ENCODE measurements at regions of chr9 and their contacts with region 1.

Region 1: DNA sequence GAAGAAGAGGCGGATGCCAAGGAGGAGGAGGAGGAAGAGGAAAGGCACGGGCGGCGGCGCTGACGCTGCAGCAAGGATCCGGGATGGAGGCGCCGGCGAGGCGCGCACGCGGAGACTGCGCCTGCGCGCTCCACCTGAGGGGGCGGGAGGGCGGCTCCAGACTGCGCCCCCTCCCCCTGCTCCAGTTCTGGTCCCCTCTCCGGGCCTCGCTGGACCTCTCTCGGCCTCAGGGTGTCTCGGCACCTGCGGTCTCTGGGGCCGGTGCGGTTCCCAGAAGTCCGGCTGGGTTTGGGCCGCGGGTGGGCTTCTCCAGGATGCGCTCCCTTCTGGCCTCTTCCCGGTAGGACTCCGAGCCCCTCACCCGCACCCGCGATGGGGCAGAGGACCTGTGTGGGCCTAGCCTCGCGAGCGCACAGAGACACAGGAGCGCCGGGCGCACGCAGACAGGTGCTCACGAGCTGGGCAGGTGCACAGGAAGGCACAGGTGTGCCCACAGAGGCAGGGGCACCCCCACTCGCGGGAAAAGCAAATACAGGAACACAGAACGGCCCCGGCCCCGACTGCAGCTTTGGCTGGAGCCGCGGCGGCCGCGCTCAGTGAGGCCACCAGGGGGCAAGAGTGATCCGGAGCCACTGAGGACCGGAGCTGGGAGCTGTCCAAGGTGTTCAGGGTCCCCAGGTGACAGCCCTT is at the start of gene NPDC1:
- DNase-seq: peak; percentile 82 to 83
- ATAC-seq: peak; percentile 58 to 77 (median 66)
- H3K4me3 ChIP-seq: peak within 1 kb of the TSS; percentile 45 to 80 (median 68)
- H3K27ac ChIP-seq: peak within 1 kb of the TSS; percentile 78 to 92 (median 88)
- H3K4me1 ChIP-seq: peaks cover 25 to 57% (median 40%) of the 10 kb centered on the region in 9 donors
- H3K27me3 ChIP-seq: peaks cover 0 to 76% (median 36%) of the 10 kb centered on the region in 7 donors
- CTCF ChIP-seq: peak; percentile 78 to 94 (median 92)
- total RNA-seq, gene NPDC1: 29.1 to 74.3 (median 52.6) TPM

Region 2: GRCh38 chr9:136965771-136966484 is 80.3 kb before region 1 on chr9:
- intact Hi-C with region 1: no loop called
- DNase-seq: peak; percentile 15 to 43
- ATAC-seq: peak in 3 of 8 donors; percentile 5 to 20 (median 16)
- H3K4me3 ChIP-seq: peak overlapping the region in 3 of 10 donors; percentile 8 to 28 (median 9)
- H3K27ac ChIP-seq: no peak overlapping the region
- H3K4me1 ChIP-seq: peaks cover under 1 to 45% (median 20%) of the 10 kb centered on the region in 9 donors
- H3K27me3 ChIP-seq: no peaks in the 10 kb centered on the region
- CTCF ChIP-seq: no peak

Region 3: DNA sequence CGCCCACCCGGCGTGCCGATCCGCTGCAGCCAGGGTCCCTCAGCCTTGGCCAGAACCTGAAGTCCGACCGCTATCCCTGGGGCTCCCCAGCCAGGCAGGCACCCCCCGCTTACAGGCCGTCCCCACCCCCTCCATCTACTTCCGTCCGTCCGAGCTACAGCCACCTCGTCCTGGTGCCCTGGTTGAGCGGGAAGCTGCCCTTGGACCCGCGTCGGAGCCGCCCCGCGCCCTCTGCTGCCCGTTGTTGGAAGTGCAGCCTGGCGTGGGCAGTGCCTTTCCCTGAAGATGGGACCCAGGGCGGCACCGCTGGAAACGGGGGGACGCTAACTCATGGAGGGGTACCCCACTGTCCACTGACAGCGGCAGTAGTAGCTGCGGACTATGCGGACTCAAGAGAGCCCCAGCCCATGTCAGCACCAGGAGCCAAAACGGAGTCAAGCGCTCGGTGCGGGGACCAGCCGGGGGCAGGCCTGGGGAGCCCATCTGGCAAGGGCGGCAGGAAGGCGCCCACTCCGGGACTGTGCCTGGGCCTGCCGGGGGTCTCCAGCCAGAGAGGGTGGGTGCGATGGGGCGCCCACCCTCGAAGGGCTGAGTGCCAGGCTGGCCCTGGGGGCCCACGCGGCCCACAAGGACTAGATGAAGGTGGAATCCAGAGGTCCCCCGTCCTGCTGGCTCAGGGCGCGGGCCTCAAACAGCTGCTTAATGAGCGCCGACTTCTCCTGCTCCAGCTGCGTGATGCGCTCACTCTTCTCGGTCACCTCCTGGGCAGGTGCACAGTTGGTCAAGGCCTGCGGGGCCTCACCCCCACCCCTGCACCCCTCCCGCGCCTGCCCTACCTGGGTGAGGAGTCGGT is 18.0 kb after region 1 on chr9:
- intact Hi-C with region 1: loop called in 7 of 10 experiments (anchors 1 to 2 kb)
- DNase-seq: peak; percentile 61 to 82
- ATAC-seq: peak; percentile 31 to 79 (median 67)
- H3K4me3 ChIP-seq: no peak overlapping the region
- H3K27ac ChIP-seq: no peak overlapping the region
- H3K4me1 ChIP-seq: peaks cover 0 to 18% (median 4%) of the 10 kb centered on the region in 9 donors
- H3K27me3 ChIP-seq: peaks cover 0 to 12% (median 5%) of the 10 kb centered on the region in 7 donors
- CTCF ChIP-seq: peak; percentile 92 to 99 (median 96)

Region 4: DNA sequence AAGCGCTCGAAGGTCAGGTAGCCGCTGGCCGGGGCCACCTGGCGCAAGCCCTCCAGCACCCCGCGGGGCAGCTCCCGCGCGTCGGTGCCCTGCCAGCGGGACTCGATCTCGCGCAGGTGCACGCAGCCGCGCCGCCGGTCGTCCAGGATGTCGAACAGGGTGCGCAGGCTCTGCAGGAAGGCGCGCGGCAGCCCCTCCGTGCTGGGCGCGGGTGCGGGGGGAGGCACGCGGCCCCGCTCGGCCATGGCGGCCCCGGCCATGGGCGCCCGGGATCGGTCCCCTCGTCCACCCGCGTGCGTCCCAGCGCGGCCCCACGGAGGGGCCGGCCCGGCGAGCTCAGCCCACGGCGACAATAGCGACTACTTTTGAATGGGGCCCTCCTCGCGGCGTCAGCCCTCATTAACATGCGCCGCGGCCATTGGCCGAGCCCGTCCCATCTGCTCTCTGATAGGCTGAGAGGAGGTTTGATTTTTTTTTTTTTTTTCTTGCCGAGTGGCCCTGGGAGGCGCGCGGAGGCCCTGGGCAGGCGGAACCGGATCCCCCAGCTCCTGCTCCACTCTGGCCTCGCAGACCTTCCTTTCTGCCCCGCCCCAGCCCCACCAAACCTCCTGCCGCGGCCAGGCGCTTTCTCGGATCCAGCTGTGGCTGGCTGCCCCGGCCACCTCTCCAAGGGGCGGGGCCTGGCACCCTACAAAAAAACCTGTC is 24.1 kb after region 1 on chr9 and contains the start of gene SAPCD2:
- intact Hi-C with region 1: loop called in 6 of 10 experiments (anchors 1 to 2 kb)
- DNase-seq: peak; percentile 87 to 88
- ATAC-seq: peak; percentile 88 to 97 (median 94)
- H3K4me3 ChIP-seq: peak within 1 kb of the TSS in 9 of 10 donors; percentile 12 to 58 (median 50)
- H3K27ac ChIP-seq: peak within 1 kb of the TSS; percentile 59 to 86 (median 82)
- H3K4me1 ChIP-seq: peaks cover 7 to 45% (median 16%) of the 10 kb centered on the region in 9 donors
- H3K27me3 ChIP-seq: peaks cover 0 to 15% (median 9%) of the 10 kb centered on the region in 7 donors
- CTCF ChIP-seq: no peak
- total RNA-seq, gene SAPCD2: 0.06 to 1.1 (median 0.11) TPM in 9 of 10 donors, not detected in the other

Region 5: GRCh38 chr9:137108608-137109249 is 62.5 kb after region 1 on chr9:
- intact Hi-C with region 1: no loop called
- DNase-seq: no peak
- ATAC-seq: no peak
- H3K4me3 ChIP-seq: no peak overlapping the region
- H3K27ac ChIP-seq: no peak overlapping the region
- H3K4me1 ChIP-seq: peaks cover 0 to 8% (median 0%) of the 10 kb centered on the region in 9 donors
- H3K27me3 ChIP-seq: no peaks in the 10 kb centered on the region
- CTCF ChIP-seq: no peak